ENCODE measurements at regions of chr10 and their contacts with region 1.

Region 1: DNA sequence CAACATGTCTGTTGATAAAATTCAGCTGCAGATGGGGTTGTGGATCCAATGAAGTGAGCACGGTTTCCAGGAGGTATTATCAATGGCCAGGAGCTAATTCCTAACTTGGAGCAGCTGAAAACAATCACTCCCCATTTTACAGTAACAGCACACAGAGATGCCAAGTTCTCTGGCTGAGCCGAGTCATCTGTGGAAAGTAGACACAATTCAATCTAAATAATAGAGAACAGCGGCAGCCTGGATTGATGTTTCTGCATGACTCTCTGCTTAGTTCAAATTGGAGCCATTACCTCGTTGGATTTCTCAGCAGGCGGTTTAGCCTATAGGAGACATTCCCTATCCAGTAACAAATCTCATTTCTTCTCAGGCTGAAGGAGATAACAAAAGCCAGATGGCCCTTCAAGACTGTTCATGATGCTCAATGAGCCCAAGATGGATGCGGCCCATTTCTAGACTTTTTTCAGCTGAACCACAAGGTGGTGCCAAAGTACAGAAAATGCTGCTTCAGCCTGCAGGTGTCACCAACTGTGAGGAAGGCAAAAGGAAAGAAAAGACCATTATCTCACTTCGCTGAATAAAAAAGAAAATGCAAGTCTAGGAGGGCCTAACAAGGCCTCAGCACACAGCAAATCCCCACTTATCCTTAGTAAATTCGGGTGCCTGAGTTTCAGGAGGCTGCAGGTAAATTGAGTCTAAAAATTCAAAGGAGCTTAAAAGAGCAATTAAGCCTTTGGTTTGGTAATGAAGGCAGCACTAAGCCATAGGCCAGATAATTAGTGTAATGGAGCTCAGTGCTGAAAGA is 83.7 kb downstream of the SLC16A9 start:
- DNase-seq: peak; percentile 34 to 58 (median 57)
- H3K4me3 ChIP-seq: no peak overlapping the region
- H3K4me3 Mint-ChIP-seq: no peak overlapping the region
- H3K27ac ChIP-seq: no peak overlapping the region
- H3K27ac Mint-ChIP-seq: no peak overlapping the region
- H3K4me1 ChIP-seq: peaks cover 4% of the 10 kb centered on the region in 2 donors
- H3K4me1 Mint-ChIP-seq: peaks cover 5% of the 10 kb centered on the region
- H3K27me3 ChIP-seq: no peaks in the 10 kb centered on the region
- H3K27me3 Mint-ChIP-seq: peaks cover 0 to 2% (median 0%) of the 10 kb centered on the region in 3 donors
- CTCF ChIP-seq: peak; percentile 84

Region 2: DNA sequence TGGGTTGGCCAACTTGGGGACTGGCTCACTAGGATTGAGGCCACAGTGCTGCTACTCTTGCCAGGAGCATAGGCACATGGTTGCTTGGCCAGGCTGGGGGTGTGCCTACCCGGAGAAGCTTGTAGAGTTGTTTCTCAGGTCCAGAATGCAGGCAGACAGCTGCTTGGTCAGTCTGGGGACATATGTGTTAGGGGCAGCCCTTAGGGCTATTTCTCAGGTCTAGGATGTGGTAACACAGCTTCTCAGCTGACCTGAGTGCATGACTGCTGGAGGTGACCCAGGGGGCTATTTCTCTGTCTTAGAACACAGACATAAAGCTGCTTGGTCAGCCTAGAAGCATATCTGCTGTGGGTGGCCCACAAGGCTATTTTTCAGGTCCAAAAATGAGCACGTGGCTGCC is 20.2 kb after region 1 on chr10:
- intact Hi-C with region 1: no loop called
- DNase-seq: no peak
- H3K4me3 ChIP-seq: no peak overlapping the region
- H3K4me3 Mint-ChIP-seq: no peak overlapping the region
- H3K27ac ChIP-seq: no peak overlapping the region
- H3K27ac Mint-ChIP-seq: no peak overlapping the region
- H3K4me1 ChIP-seq: no peaks in the 10 kb centered on the region
- H3K4me1 Mint-ChIP-seq: no peaks in the 10 kb centered on the region
- H3K27me3 ChIP-seq: no peaks in the 10 kb centered on the region
- H3K27me3 Mint-ChIP-seq: peaks cover 0 to 1% (median 1%) of the 10 kb centered on the region in 3 donors
- CTCF ChIP-seq: no peak

Region 3: GRCh38 chr10:59808896-59809643 is 183.1 kb after region 1 on chr10:
- intact Hi-C with region 1: loop called in 1 of 2 experiments (anchors 10 kb)
- DNase-seq: peak; percentile 46 to 51 (median 46)
- H3K4me3 ChIP-seq: no peak overlapping the region
- H3K4me3 Mint-ChIP-seq: no peak overlapping the region
- H3K27ac ChIP-seq: peak overlapping the region in 1 of 2 donors; percentile 14
- H3K27ac Mint-ChIP-seq: no peak overlapping the region
- H3K4me1 ChIP-seq: peaks cover 0 to 3% of the 10 kb centered on the region in 2 donors
- H3K4me1 Mint-ChIP-seq: peaks cover 3% of the 10 kb centered on the region
- H3K27me3 ChIP-seq: no peaks in the 10 kb centered on the region
- H3K27me3 Mint-ChIP-seq: no peaks in the 10 kb centered on the region
- CTCF ChIP-seq: peak; percentile 63

Region 4: DNA sequence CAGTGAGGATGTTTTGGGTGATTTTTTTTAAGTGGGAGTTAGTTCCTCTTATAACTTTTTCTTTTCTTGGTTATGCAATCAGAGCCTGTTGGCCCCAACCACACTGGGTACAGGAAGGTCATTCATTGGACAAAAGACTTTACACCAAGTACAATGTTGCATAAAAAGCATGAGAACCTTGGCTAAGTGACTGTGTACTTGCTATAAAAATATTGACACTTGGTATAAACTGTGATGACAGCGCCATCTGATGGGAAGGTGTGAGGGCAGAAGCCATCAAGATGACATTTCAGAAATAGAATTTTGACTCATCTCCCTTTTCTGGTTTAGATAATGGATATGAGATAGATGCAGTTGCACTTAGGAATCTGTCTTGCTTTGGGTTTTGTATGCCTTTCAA is 406.8 kb after region 1 on chr10:
- intact Hi-C with region 1: loop called in 1 of 2 experiments (anchors 5 kb)
- DNase-seq: peak; percentile 87 to 95 (median 94)
- H3K4me3 ChIP-seq: peak overlapping the region in 1 of 3 experiments; percentile 2
- H3K4me3 Mint-ChIP-seq: no peak overlapping the region
- H3K27ac ChIP-seq: peak overlapping the region; percentile 80 to 83
- H3K27ac Mint-ChIP-seq: peak overlapping the region; percentile 87 to 96 (median 95)
- H3K4me1 ChIP-seq: peaks cover 41 to 42% of the 10 kb centered on the region in 2 donors
- H3K4me1 Mint-ChIP-seq: peaks cover 38% of the 10 kb centered on the region
- H3K27me3 ChIP-seq: no peaks in the 10 kb centered on the region
- H3K27me3 Mint-ChIP-seq: peaks cover 0 to 2% (median 2%) of the 10 kb centered on the region in 3 donors
- CTCF ChIP-seq: peak; percentile 76

Region 5: DNA sequence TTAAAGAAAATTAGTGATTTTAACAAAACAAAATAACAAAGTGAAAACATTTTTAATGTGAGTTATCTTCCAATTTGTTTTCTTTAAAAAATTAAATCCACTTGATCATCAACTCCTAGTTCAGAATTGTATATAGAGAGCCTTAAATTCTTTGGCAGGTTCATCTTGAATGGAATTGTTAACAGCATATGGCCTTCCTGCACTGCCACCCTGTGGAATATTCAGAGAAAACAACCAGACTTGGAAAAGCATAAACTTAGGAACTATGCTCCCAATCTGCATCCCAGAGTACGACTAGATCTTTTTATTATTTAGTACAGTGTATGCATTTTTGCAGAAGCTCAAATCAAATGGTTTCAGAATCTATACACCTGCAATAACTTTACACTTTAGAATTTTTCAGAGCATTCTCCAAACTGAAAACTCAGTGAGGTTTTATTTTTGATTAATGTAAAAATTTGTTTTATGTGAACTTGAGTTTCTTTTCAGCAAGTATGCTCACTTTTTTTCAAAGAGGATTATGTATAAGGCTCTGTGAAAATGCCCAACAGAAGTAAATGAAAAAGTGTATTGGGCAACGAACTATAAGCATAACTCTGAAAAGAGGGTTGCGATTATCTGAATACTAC is 808.6 kb after region 1 on chr10:
- intact Hi-C with region 1: loop called in 1 of 2 experiments (anchors 10 kb)
- DNase-seq: peak; percentile 4 to 17 (median 15)
- H3K4me3 ChIP-seq: no peak overlapping the region
- H3K4me3 Mint-ChIP-seq: no peak overlapping the region
- H3K27ac ChIP-seq: no peak overlapping the region
- H3K27ac Mint-ChIP-seq: no peak overlapping the region
- H3K4me1 ChIP-seq: no peaks in the 10 kb centered on the region
- H3K4me1 Mint-ChIP-seq: no peaks in the 10 kb centered on the region
- H3K27me3 ChIP-seq: no peaks in the 10 kb centered on the region
- H3K27me3 Mint-ChIP-seq: no peaks in the 10 kb centered on the region
- CTCF ChIP-seq: peak; percentile 78

Region 6: GRCh38 chr10:60646966-60647796 is 1021.3 kb after region 1 on chr10:
- intact Hi-C with region 1: loop called (anchors 10 kb)
- DNase-seq: peak; percentile 27 to 66 (median 45)
- H3K4me3 ChIP-seq: no peak overlapping the region
- H3K4me3 Mint-ChIP-seq: no peak overlapping the region
- H3K27ac ChIP-seq: no peak overlapping the region
- H3K27ac Mint-ChIP-seq: no peak overlapping the region
- H3K4me1 ChIP-seq: no peaks in the 10 kb centered on the region
- H3K4me1 Mint-ChIP-seq: no peaks in the 10 kb centered on the region
- H3K27me3 ChIP-seq: no peaks in the 10 kb centered on the region
- H3K27me3 Mint-ChIP-seq: no peaks in the 10 kb centered on the region
- CTCF ChIP-seq: peak; percentile 80

Region 7: DNA sequence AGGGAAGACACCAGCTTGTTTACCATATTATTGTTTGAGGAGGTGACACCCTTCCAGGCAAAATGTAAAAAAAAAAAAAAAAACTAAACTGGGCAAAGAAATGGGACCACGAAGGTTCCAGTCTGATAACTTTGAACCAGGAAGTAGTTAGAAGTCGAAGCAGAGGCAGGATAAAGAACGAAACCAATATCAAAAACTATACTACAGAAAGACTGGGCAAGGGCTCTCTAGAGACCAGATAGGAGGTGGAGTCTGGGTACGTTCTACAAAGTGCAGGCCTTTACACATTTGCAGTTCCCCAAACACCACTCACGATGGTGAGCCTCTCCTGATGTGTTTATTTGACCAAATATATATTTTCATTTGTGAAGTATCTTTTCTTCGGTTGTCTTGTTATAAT is 1026.7 kb after region 1 on chr10:
- intact Hi-C with region 1: loop called (anchors 10 kb)
- DNase-seq: no peak
- H3K4me3 ChIP-seq: no peak overlapping the region
- H3K4me3 Mint-ChIP-seq: no peak overlapping the region
- H3K27ac ChIP-seq: no peak overlapping the region
- H3K27ac Mint-ChIP-seq: no peak overlapping the region
- H3K4me1 ChIP-seq: no peaks in the 10 kb centered on the region
- H3K4me1 Mint-ChIP-seq: no peaks in the 10 kb centered on the region
- H3K27me3 ChIP-seq: no peaks in the 10 kb centered on the region
- H3K27me3 Mint-ChIP-seq: no peaks in the 10 kb centered on the region
- CTCF ChIP-seq: no peak